ENCODE measurements at regions of chr1 and their contacts with region 1.

Region 1: GRCh38 chr1:223887747-223888418 is 42.1 kb upstream of the TP53BP2 start:
- DNase-seq: peak; percentile 45 to 93
- H3K4me3 ChIP-seq: peak overlapping the region in 1 of 2 donors; percentile 33
- H3K27ac ChIP-seq: peak overlapping the region; percentile 69 to 70
- H3K4me1 ChIP-seq: peaks cover 0 to 8% of the 10 kb centered on the region in 2 donors
- H3K27me3 ChIP-seq: no peaks in the 10 kb centered on the region
- CTCF ChIP-seq: no peak

Region 2: GRCh38 chr1:222754366-222755139 is 1133.3 kb before region 1 on chr1:
- intact Hi-C with region 1: loop called (anchors 10 kb)
- DNase-seq: peak; percentile 53 to 81
- H3K4me3 ChIP-seq: peak overlapping the region in 1 of 2 donors; percentile 28
- H3K27ac ChIP-seq: peak overlapping the region; percentile 64 to 77
- H3K4me1 ChIP-seq: peaks cover 0 to 4% of the 10 kb centered on the region in 2 donors
- H3K27me3 ChIP-seq: no peaks in the 10 kb centered on the region
- CTCF ChIP-seq: no peak

Region 3: DNA sequence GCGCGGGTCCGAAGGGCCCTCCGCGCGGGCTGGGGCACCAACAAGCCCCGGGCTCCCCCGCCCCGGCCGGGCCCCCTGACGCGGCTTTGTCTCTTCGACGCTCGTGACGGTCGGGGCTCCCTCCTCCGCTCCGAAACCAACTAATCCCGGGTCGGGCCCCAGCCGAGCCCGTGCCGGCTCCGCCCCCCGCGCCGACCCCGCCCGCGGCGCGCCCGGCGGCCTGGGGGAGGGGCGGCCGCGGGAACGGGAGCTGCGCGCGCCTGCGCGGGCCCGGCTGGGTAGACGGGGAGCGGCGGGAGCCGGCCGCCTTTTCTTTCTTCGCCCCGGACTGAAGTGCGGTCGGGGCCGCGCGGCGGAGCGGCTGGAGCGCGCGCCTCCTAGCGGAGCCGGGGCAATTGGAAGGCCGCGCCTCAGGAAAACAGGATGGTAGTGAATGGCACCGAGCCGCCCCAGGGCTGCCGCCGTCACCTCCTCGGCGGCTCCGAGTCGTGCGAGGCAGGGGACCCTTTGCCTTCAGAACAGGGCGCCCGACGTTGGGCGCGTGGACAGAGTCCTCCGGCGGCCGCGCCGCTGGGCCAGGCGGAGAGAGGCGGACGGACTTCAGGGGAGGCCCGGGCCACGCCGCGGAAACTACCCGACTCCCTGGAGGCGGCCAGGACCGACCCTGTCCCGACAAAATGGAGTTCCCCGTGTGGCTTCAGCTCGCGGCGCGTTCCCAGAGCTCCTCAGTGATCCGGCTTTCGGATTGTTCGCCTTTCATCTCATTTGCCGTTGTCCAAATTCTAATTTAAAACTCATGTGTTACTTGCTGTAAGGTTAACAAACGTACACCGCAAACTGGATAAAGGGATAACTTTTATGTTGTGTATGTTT is 41.8 kb before region 1 on chr1 and contains the start of gene TP53BP2:
- intact Hi-C with region 1: loop called (anchors 2 kb)
- DNase-seq: peak; percentile 43 to 92
- H3K4me3 ChIP-seq: peak within 1 kb of the TSS; percentile 93 to 95
- H3K27ac ChIP-seq: peak within 1 kb of the TSS; percentile 100
- H3K4me1 ChIP-seq: peaks cover 2 to 22% of the 10 kb centered on the region in 2 donors
- H3K27me3 ChIP-seq: no peaks in the 10 kb centered on the region
- CTCF ChIP-seq: peak; percentile 54 to 87 (median 84)
- total RNA-seq, gene TP53BP2: 162 TPM

Measured in ascending aorta (tissue), 2 donors.